Activated naive CD8-positive, alpha-beta T cell treated with anti-CD3 and anti-CD28 coated beads, Interleukin-2, amount 10 ng/mL, durations not matched to agents 7 days and 5 days (primary cell): ENCODE measurements at regions of chr2 and their contacts with region 1.

Region 1: GRCh38 chr2:9843229-9844035 is at the start of gene TAF1B:
- DNase-seq: peak; percentile 90
- ATAC-seq: peak; percentile 88
- H3K4me3 Mint-ChIP-seq: peak within 1 kb of the TSS; percentile 88
- H3K27ac Mint-ChIP-seq: peak within 1 kb of the TSS; percentile 88
- H3K4me1 Mint-ChIP-seq: peaks cover 23% of the 10 kb centered on the region
- H3K27me3 Mint-ChIP-seq: no peaks in the 10 kb centered on the region
- total RNA-seq, gene TAF1B: 18.8 to 19.0 TPM

Region 2: GRCh38 chr2:9799665-9800632 is 43.5 kb before region 1 on chr2:
- POLR2A ChIA-PET with region 1: interaction called, 15 read pairs
- DNase-seq: peak; percentile 94
- ATAC-seq: peak; percentile 96
- H3K4me3 Mint-ChIP-seq: peak overlapping the region; percentile 86
- H3K27ac Mint-ChIP-seq: peak overlapping the region; percentile 96
- H3K4me1 Mint-ChIP-seq: peaks cover 19% of the 10 kb centered on the region
- H3K27me3 Mint-ChIP-seq: peaks cover 7% of the 10 kb centered on the region